PC-9 (cell line): ENCODE measurements at regions of chr19 and their contacts with region 1.

Region 1: DNA sequence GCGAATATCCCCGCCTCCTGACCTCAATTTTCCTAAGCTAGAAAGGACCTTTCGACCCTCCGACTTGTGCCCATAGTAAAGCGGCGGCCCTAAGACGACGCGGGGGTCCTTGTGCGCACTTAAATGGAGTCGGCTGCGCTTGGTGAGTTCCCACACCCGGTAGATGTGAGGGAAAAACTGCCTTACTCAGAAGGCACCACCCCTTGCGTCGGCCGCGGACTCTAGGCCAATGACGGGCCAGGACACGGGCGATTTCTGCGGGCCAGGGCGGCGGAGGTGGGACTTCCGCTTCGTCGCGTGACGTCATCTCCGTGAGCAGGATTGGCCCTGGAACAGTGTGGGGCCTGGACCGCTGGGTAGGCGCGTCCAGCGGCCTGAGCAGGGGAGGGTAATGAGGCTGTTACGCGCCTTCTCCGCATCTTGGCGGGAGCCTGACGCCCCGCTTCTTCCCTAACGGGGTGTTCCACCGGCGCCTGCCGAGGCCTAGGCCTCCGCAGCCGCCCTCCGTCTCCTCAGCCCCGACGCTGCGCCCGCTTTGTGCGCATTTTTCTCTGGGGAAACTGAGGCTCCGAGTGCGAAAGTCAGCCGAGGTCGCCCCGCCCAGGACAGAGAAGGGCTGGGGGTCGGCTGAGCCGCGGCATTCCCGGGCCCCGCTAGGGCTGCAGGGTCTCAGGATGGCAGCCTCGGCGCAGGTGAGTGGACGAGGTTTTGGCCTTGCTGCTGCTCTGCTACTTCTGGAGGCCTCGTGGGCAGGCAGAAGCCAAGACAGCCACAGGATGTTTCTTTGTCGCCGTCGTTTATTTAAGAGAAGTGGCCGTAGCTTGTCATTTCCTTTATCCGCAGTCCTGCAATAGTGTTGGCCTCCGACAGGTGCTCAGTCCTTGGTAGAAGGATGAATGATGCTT is at the start of gene ZNF543:
- DNase-seq: peak; percentile 92 to 96
- H3K4me3 ChIP-seq: peak within 1 kb of the TSS; percentile 91
- H3K27ac ChIP-seq: peak within 1 kb of the TSS; percentile 51
- H3K4me1 ChIP-seq: peaks cover 19% of the 10 kb centered on the region
- H3K27me3 ChIP-seq: no peaks in the 10 kb centered on the region
- CTCF ChIP-seq: no peak
- total RNA-seq, gene ZNF543: 8.9 and 9.5 TPM in 2 replicates

Region 2: DNA sequence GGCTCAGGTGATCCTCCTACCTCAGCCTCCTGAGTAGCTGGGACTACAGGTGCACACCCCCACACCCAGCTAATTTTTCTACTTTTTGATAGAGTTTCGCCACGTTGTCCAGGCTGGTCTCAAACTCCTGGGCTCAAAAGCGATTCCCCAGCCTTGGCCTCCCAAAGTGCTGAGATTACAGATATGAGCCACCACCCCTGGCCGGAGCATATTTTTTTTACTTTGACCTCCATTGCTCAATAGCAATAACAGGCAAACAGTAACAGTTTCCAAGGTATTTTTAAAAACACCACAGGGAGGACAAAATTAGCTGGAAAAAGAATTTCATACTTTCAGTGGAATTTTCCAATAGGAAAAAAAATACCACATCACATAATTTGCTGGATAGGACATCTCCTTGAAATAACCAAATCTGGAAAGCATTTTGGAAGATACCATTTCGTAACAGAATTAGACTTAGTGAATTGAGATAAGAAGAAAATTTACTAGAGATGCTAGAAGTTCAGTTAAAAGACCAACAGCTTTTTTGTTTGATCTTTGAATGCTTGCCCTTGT is 158.4 kb before region 1 on chr19:
- CTCF ChIA-PET with region 1: no interaction called
- POLR2A ChIA-PET with region 1: no interaction called
- intact Hi-C with region 1: no loop called
- DNase-seq: no peak
- H3K4me3 ChIP-seq: no peak overlapping the region
- H3K27ac ChIP-seq: no peak overlapping the region
- H3K4me1 ChIP-seq: no peaks in the 10 kb centered on the region
- H3K27me3 ChIP-seq: peaks cover 40% of the 10 kb centered on the region
- CTCF ChIP-seq: no peak

Region 3: DNA sequence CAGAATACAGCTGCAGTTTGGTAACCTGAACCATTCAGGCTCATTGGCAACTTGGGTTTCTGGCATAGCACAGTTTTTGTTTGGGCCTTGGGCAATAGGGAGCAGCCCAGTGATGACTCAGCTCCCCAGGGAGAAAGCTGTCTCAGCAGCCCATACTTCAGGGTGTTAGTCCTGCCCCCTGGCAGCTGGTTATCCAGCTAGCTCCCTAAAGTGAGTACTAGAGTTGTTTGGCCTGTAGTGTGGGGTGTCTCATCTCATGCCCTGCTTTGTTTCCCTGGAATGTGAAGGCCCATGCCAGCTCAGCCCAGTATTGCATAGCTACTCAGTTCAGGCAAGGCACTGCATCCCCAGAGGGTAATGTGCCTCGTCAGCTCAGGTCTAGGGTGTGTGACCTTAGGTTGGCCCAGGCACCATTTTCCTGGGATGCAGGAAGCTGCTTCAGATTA is 18.4 kb before region 1 on chr19:
- CTCF ChIA-PET with region 1: interaction called, 9 read pairs
- POLR2A ChIA-PET with region 1: interaction called, 7 read pairs
- intact Hi-C with region 1: loop called (anchors 1 kb)
- DNase-seq: peak; percentile 89 to 95
- H3K4me3 ChIP-seq: no peak overlapping the region
- H3K27ac ChIP-seq: peak overlapping the region; percentile 59
- H3K4me1 ChIP-seq: peaks cover 26% of the 10 kb centered on the region
- H3K27me3 ChIP-seq: no peaks in the 10 kb centered on the region
- CTCF ChIP-seq: no peak

Region 4: DNA sequence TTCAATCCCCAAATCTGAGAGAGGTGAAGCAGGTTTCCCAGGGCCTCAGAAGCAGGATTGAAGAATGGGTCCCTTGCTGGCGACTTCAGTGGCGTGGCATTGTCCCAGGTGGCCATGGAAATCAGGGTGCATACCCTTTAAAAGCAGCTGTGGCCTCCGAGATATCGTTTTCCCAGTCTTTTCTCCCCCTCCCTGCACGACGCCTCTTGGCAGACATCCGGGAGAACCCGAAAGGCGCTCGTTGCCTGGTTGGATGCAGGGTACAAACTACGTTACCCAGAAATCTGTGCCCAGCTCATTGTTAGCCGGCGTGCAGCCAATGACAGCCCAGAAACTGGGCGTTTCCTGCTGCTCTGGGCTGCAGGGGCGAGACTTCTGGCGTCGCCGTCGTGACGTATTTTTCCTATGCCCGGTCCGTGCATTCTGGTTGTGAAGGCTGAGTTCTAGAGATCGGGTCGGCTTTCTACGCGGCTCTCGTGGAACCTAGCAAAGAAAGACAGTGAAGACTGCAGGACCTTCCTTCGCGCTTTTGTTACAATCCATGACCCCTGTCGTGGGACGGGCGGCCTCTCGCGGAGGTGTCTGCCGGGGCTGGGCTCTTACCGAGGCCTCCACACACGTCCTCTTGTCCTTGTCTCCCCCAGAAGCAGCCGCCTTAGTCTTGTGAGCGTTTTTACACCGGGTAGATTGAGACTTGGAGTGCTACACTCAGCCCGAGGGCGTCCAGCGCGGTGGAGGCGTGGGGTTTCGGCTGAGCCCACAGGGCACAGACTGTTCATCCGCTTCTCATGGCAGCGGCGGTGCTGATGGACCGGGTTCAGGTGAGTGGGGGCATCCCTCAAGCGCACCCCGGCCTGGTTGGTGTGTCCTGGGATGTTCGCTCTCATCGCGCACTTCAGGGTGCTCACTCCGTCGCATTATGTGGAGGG is 30.7 kb after region 1 on chr19 and contains the start of gene ZNF304:
- CTCF ChIA-PET with region 1: no interaction called
- POLR2A ChIA-PET with region 1: no interaction called
- intact Hi-C with region 1: loop called (anchors 1 kb)
- DNase-seq: peak; percentile 94 to 95
- H3K4me3 ChIP-seq: peak within 1 kb of the TSS; percentile 95
- H3K27ac ChIP-seq: 0 out of 2 replicates have a peak within 1 kb of the TSS, but pooled peaks have one; percentile 16
- H3K4me1 ChIP-seq: peaks cover 10% of the 10 kb centered on the region
- H3K27me3 ChIP-seq: no peaks in the 10 kb centered on the region
- CTCF ChIP-seq: no peak
- total RNA-seq, gene ZNF304: 10.9 and 11.4 TPM in 2 replicates